ENCODE measurements at regions of chr11 and their contacts with region 1.

Region 1: DNA sequence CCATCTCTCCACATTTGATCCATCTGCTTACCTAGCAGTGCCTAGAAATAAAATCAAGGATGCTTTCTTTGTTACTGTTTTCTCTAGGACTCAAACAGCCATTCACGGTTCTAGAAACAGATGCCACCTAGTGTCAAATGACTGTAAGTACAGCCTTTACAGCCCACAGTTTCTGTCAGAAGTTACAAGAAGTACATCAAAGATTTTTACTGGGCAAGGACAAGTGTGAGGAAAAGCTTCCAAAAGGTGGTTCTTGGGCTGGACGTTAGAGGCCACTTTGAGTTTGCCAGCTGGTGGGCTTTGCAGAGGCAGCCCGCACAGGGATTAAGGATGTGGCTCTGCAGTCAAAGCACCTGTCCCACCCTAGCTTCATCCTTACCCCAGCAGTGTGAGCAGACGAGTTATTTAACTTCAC is 6.9 kb downstream of the KMT5B start:
- DNase-seq: peak; percentile 46
- H3K4me3 ChIP-seq: no peak overlapping the region
- H3K27ac ChIP-seq: peak overlapping the region in 1 of 2 donors; percentile 44
- H3K4me1 ChIP-seq: peaks cover 13% of the 10 kb centered on the region
- H3K27me3 ChIP-seq: no peaks in the 10 kb centered on the region
- CTCF ChIP-seq: peak; percentile 64 to 88 (median 84)
- POLR2A ChIP-seq: no peak

Region 2: DNA sequence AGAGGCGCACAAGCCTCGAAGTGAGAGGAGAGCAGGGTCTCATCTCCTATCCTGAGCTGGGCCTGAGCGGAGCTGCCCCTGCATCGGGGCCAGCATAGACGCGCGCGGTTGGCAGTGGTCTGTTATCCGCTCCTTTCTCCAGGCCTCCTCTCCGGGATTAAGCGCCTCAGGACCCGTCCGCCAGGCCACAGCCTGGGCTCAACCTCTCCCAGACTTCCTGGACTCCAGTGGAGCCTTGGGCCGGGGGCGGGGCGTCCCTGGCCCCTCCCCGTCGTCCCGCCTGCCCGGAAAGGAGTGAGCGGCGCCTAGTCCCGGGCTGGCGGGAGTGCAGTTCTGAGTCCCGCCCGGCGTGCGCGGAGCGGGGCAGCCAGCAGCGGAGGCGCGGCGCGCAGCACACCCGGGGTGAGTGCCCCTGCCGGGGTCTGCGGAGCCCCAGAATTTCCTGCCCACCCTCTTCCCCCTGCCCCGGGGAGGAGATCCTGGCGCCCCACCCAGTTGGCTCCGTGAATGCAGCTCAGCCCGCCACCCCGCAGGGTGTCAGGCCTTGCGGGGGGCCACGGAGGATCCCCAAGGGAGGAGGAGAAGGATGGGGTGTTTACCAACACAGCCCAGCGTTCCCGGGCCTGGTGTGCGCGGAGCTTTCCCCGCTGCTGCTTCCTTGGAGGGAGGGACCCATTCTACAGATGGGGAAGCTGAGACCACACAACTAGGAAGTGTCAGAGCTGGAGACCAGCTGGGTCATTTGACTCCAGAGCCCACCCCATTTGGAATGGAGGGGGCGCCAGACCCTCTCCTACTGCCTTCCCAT is 167.3 kb before region 1 on chr11 and contains the start of gene TCIRG1:
- intact Hi-C with region 1: loop called (anchors 5 kb)
- DNase-seq: peak; percentile 88
- H3K4me3 ChIP-seq: peak within 1 kb of the TSS; percentile 63 to 76
- H3K27ac ChIP-seq: peak within 1 kb of the TSS; percentile 80 to 88
- H3K4me1 ChIP-seq: peaks cover 10% of the 10 kb centered on the region
- H3K27me3 ChIP-seq: no peaks in the 10 kb centered on the region
- CTCF ChIP-seq: peak in 2 of 4 experiments; percentile 40 to 71
- POLR2A ChIP-seq: peak; percentile 99
- total RNA-seq, gene TCIRG1: 114 to 118 TPM

Region 3: GRCh38 chr11:68076371-68077042 is 129.7 kb before region 1 on chr11:
- intact Hi-C with region 1: loop called (anchors 10 kb)
- DNase-seq: no peak
- H3K4me3 ChIP-seq: no peak overlapping the region
- H3K27ac ChIP-seq: peak overlapping the region in 1 of 2 donors; percentile 48
- H3K4me1 ChIP-seq: peaks cover 19% of the 10 kb centered on the region
- H3K27me3 ChIP-seq: no peaks in the 10 kb centered on the region
- CTCF ChIP-seq: peak in 2 of 4 experiments; percentile 5 to 36
- POLR2A ChIP-seq: no peak

Region 4: DNA sequence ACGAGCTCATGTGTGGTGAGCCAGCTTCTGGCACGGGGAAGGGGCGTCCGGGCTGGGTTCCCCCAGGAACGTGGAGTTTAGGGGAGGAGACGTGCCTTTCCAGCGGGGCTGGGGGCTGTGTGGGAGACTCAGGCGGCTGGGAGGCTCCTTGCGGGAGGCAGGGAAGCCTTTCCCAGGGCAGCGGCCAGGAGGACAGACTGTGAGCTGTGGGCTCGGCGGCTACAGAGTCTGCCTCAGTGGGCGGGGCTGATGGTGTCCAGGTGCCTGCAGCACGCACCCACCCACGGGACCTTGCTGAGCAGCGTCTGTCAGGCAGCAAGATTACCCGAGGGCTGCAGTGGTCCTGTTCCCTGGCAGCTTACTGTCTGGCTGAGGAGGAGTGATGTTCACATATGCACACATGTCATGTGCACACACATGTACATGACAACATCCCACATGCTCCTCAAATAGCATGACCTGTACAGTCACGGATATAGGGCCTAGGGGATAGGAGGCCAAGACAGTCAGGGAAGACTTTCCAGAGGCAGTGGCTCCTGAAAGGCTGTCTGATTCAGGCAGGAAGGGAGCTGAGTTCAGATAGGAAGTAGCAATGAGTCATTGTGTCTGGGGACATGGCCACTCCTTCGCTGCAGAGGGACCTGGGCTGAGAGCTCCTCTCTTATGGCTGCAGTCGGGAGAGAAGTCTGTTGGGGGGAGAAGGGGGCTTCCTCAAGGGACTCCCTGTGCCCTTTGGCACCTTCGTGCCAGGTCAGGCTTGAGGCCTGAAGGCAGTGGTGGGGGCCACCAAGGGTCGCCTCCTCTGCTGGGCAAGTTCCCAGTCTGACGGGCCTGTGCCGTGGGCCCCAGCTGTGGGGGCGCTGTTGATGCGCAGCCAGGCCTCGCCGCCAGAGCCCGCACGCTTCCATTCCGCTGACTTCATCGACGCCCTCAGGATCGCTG is 231.1 kb after region 1 on chr11:
- intact Hi-C with region 1: no loop called
- DNase-seq: no peak
- H3K4me3 ChIP-seq: no peak overlapping the region
- H3K27ac ChIP-seq: no peak overlapping the region
- H3K4me1 ChIP-seq: no peaks in the 10 kb centered on the region
- H3K27me3 ChIP-seq: no peaks in the 10 kb centered on the region
- CTCF ChIP-seq: no peak
- POLR2A ChIP-seq: no peak

Measured in prostate gland (tissue), 2 donors.